Naive thymus-derived CD4-positive, alpha-beta T cell (primary cell): ENCODE measurements at regions of chr14 and their contacts with region 1.

Region 1: GRCh38 chr14:55430024-55430690 is 10.3 kb downstream of the TBPL2 start:
- DNase-seq: peak in 7 of 9 donors; percentile 65 to 83 (median 77)
- ATAC-seq: peak; percentile 94
- H3K4me3 ChIP-seq: no peak overlapping the region
- H3K4me3 Mint-ChIP-seq: no peak overlapping the region
- H3K27ac ChIP-seq: peak overlapping the region; percentile 10
- H3K27ac Mint-ChIP-seq: peak overlapping the region in 8 of 9 donors; percentile 2 to 93 (median 70)
- H3K4me1 ChIP-seq: peaks cover 15 to 32% of the 10 kb centered on the region in 2 donors
- H3K4me1 Mint-ChIP-seq: peaks cover 18 to 48% (median 39%) of the 10 kb centered on the region in 7 donors
- H3K27me3 ChIP-seq: no peaks in the 10 kb centered on the region
- H3K27me3 Mint-ChIP-seq: no peaks in the 10 kb centered on the region

Region 2: GRCh38 chr14:55191203-55192053 is 238.7 kb before region 1 on chr14 and contains the start of gene DLGAP5:
- CTCF ChIA-PET with region 1: interaction called, 6 read pairs
- POLR2A ChIA-PET with region 1: no interaction called
- intact Hi-C with region 1: loop called in 1 of 2 experiments (anchors 2 kb)
- DNase-seq: peak; percentile 59 to 90 (median 86)
- ATAC-seq: peak; percentile 98
- H3K4me3 ChIP-seq: peak within 1 kb of the TSS; percentile 84
- H3K4me3 Mint-ChIP-seq: peak within 1 kb of the TSS; percentile 88 to 97 (median 90)
- H3K27ac ChIP-seq: peak within 1 kb of the TSS; percentile 58
- H3K27ac Mint-ChIP-seq: peak within 1 kb of the TSS; percentile 46 to 92 (median 68)
- H3K4me1 ChIP-seq: peaks cover 7 to 10% of the 10 kb centered on the region in 2 donors
- H3K4me1 Mint-ChIP-seq: peaks cover 5 to 42% (median 18%) of the 10 kb centered on the region in 7 donors
- H3K27me3 ChIP-seq: no peaks in the 10 kb centered on the region
- H3K27me3 Mint-ChIP-seq: peaks cover 0 to 4% (median 0%) of the 10 kb centered on the region in 5 donors
- total RNA-seq, gene DLGAP5: 0.49 to 46.7 TPM in 2 of 5 experiments, not detected in the others

Region 3: GRCh38 chr14:55245657-55246268 is 184.4 kb before region 1 on chr14:
- CTCF ChIA-PET with region 1: interaction called, 11 read pairs
- POLR2A ChIA-PET with region 1: no interaction called
- intact Hi-C with region 1: loop called (anchors 1 kb)
- DNase-seq: peak in 7 of 9 donors; percentile 15 to 52 (median 34)
- ATAC-seq: peak; percentile 75
- H3K4me3 ChIP-seq: no peak overlapping the region
- H3K4me3 Mint-ChIP-seq: no peak overlapping the region
- H3K27ac ChIP-seq: no peak overlapping the region
- H3K27ac Mint-ChIP-seq: no peak overlapping the region
- H3K4me1 ChIP-seq: no peaks in the 10 kb centered on the region
- H3K4me1 Mint-ChIP-seq: no peaks in the 10 kb centered on the region
- H3K27me3 ChIP-seq: no peaks in the 10 kb centered on the region
- H3K27me3 Mint-ChIP-seq: peaks cover 8 to 45% (median 12%) of the 10 kb centered on the region in 5 donors

Region 4: GRCh38 chr14:55373784-55374705 is 56.1 kb before region 1 on chr14:
- CTCF ChIA-PET with region 1: interaction called, 3 read pairs
- POLR2A ChIA-PET with region 1: interaction called, 7 read pairs
- intact Hi-C with region 1: loop called in 1 of 2 experiments (anchors 2 kb)
- DNase-seq: peak in 8 of 9 donors; percentile 18 to 76 (median 58)
- ATAC-seq: peak; percentile 93
- H3K4me3 ChIP-seq: no peak overlapping the region
- H3K4me3 Mint-ChIP-seq: peak overlapping the region in 9 of 10 donors; percentile 22 to 82 (median 54)
- H3K27ac ChIP-seq: peak overlapping the region; percentile 64
- H3K27ac Mint-ChIP-seq: peak overlapping the region; percentile 75 to 94 (median 83)
- H3K4me1 ChIP-seq: peaks cover 12 to 20% of the 10 kb centered on the region in 2 donors
- H3K4me1 Mint-ChIP-seq: peaks cover 13 to 44% (median 30%) of the 10 kb centered on the region in 7 donors
- H3K27me3 ChIP-seq: no peaks in the 10 kb centered on the region
- H3K27me3 Mint-ChIP-seq: no peaks in the 10 kb centered on the region

Region 5: GRCh38 chr14:55579724-55580469 is 149.7 kb after region 1 on chr14 and contains the start of gene KTN1:
- CTCF ChIA-PET with region 1: no interaction called
- POLR2A ChIA-PET with region 1: no interaction called
- intact Hi-C with region 1: loop called in 1 of 2 experiments (anchors 2 kb)
- DNase-seq: peak; percentile 77 to 90 (median 88)
- ATAC-seq: peak; percentile 94
- H3K4me3 ChIP-seq: peak within 1 kb of the TSS; percentile 93
- H3K4me3 Mint-ChIP-seq: peak within 1 kb of the TSS; percentile 93 to 98 (median 95)
- H3K27ac ChIP-seq: peak within 1 kb of the TSS; percentile 86
- H3K27ac Mint-ChIP-seq: peak within 1 kb of the TSS; percentile 90 to 97 (median 93)
- H3K4me1 ChIP-seq: peaks cover 20 to 34% of the 10 kb centered on the region in 2 donors
- H3K4me1 Mint-ChIP-seq: peaks cover 20 to 28% (median 27%) of the 10 kb centered on the region in 7 donors
- H3K27me3 ChIP-seq: no peaks in the 10 kb centered on the region
- H3K27me3 Mint-ChIP-seq: no peaks in the 10 kb centered on the region
- total RNA-seq, gene KTN1: 87.3 to 131 (median 105) TPM

Region 6: GRCh38 chr14:57390028-57390805 is 1960.1 kb after region 1 on chr14 and contains the start of gene NAA30:
- CTCF ChIA-PET with region 1: no interaction called
- POLR2A ChIA-PET with region 1: interaction called, 3 read pairs
- intact Hi-C with region 1: loop called in 1 of 2 experiments (anchors 10 kb)
- DNase-seq: peak; percentile 80 to 97 (median 92)
- ATAC-seq: peak; percentile 98
- H3K4me3 ChIP-seq: peak within 1 kb of the TSS; percentile 68
- H3K4me3 Mint-ChIP-seq: peak within 1 kb of the TSS; percentile 86 to 98 (median 94)
- H3K27ac ChIP-seq: peak within 1 kb of the TSS; percentile 72
- H3K27ac Mint-ChIP-seq: peak within 1 kb of the TSS; percentile 88 to 99 (median 95)
- H3K4me1 ChIP-seq: peaks cover 11 to 13% of the 10 kb centered on the region in 2 donors
- H3K4me1 Mint-ChIP-seq: peaks cover 31 to 58% (median 40%) of the 10 kb centered on the region in 7 donors
- H3K27me3 ChIP-seq: no peaks in the 10 kb centered on the region
- H3K27me3 Mint-ChIP-seq: peaks cover 0 to under 1% (median 0%) of the 10 kb centered on the region in 5 donors
- total RNA-seq, gene NAA30: 14.6 to 19.6 (median 16.2) TPM